ENCODE measurements at regions of chr20 and their contacts with region 1.

Region 1: DNA sequence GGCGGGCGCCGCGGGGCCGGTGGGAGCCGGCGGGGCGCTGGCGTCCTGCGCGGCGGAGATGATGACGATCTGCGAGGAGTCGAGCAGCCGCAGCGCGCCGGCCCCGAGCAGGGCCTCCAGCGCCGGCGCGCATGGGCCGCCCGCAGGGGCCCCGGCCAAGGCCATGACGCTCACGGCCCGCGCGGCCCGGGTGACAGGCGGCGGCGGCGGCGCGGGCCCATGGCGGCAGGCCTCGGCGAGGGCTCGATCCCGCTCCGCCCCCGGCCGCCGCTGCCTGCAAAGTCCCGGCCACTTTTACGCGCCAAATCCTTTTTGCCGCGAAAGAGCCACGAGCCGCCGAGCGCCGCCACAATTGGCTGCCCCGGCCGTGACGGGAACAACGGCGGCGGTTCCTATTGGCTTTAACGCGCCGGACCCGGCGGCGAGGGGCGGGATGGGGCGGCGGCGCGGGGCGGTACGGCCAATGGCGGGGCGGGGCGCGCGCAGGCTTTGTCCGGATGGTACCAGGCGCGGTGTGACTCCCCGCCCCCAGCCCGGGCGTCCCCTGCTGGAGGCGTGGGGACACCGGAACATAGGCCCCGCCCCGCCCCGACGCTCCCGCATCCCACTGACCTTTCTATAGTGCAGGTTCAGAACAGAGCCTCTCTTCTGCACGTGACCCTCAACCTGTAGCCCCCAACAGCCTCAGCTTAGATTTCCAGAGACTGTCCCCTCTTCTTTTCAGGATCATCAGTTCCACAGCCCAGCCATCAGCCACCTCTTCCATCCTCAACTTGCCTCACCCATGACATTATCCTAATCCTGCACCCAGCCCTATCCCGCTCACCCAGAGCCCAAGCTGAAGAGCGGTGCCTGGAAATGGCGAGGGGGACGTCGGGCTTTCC is at the start of gene E2F1:
- DNase-seq: peak; percentile 97
- H3K4me3 Mint-ChIP-seq: peak within 1 kb of the TSS; percentile 92
- H3K27ac Mint-ChIP-seq: peak within 1 kb of the TSS; percentile 89
- H3K4me1 Mint-ChIP-seq: peaks cover 71% of the 10 kb centered on the region
- H3K27me3 Mint-ChIP-seq: no peaks in the 10 kb centered on the region
- total RNA-seq, gene E2F1: 77.5 and 80.6 TPM in 2 replicates

Region 2: DNA sequence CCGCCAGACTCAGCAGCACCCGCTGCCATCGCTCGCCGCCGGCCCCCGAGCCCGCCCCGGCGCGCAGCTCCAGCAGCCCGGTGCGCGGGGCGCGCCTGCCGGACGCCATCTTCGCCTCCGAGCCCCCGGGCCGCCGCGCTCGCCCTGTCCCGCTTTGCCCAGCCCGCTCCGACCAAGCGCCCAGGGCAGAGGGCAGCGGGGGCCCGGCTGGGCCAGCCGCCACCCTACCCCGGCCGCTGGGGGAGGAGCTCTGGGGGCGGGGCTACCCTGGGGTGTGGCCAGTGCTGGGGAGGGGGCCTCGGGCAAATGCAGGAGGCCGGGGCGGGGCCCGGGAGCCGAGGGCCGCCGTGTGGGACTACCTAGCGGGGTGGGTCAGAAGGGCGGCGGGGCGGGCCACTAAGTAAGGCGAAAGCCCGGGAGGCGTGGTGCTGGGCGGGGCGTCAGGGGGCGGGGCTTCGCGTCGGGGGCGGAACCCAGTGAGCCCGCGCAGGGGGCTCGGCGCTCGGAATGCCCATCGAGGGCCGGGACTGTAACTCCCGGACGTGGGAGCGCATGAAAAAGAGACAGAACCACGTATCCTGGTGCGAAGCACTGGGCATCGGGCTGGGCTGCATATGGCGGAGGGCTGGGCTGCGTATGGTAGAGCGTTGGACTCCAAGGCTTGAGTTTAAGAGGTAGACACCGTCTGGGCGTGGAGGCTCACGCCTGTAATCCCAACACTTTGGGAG is 242.7 kb before region 1 on chr20 and contains the start of gene SNTA1:
- intact Hi-C with region 1: loop called (anchors 1 kb)
- DNase-seq: peak; percentile 82
- H3K4me3 Mint-ChIP-seq: peak within 1 kb of the TSS; percentile 88
- H3K27ac Mint-ChIP-seq: peak within 1 kb of the TSS; percentile 76
- H3K4me1 Mint-ChIP-seq: peaks cover 10% of the 10 kb centered on the region
- H3K27me3 Mint-ChIP-seq: peaks cover 11% of the 10 kb centered on the region
- total RNA-seq, gene SNTA1: 0.76 and 0.91 TPM in 2 replicates

Region 3: GRCh38 chr20:33653218-33653899 is 33.0 kb before region 1 on chr20:
- intact Hi-C with region 1: no loop called
- DNase-seq: no peak
- H3K4me3 Mint-ChIP-seq: no peak overlapping the region
- H3K27ac Mint-ChIP-seq: no peak overlapping the region
- H3K4me1 Mint-ChIP-seq: peaks cover 15% of the 10 kb centered on the region
- H3K27me3 Mint-ChIP-seq: no peaks in the 10 kb centered on the region

Region 4: GRCh38 chr20:33674295-33675135 is 11.8 kb before region 1 on chr20 and contains the start of gene NECAB3:
- intact Hi-C with region 1: loop called (anchors 1 kb)
- DNase-seq: peak; percentile 73
- H3K4me3 Mint-ChIP-seq: peak within 1 kb of the TSS; percentile 91
- H3K27ac Mint-ChIP-seq: peak within 1 kb of the TSS; percentile 87
- H3K4me1 Mint-ChIP-seq: peaks cover 54% of the 10 kb centered on the region
- H3K27me3 Mint-ChIP-seq: no peaks in the 10 kb centered on the region
- total RNA-seq, gene NECAB3: 30.7 and 31.2 TPM in 2 replicates

Region 5: DNA sequence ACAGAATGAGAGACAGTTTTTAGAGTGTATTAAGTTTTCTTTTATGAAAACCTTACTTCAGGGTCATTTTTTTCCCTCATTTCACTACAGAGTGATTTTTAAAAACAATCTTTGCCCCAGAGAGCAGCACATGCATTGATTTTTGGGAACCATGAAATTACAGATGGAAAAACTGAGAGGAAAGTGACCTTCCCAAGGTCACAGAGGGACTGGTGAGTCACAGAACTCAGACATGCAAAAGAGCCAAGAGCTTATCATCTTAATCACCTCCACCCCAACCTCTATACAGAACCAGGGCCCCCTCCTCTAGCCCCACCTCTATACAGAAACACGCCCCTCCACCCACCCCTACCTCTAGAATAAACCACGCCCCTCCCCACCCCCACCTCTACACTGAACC is 23.1 kb after region 1 on chr20:
- intact Hi-C with region 1: loop called (anchors 1 kb)
- DNase-seq: no peak
- H3K4me3 Mint-ChIP-seq: no peak overlapping the region
- H3K27ac Mint-ChIP-seq: peak overlapping the region; percentile 84
- H3K4me1 Mint-ChIP-seq: peaks cover 28% of the 10 kb centered on the region
- H3K27me3 Mint-ChIP-seq: no peaks in the 10 kb centered on the region

Region 6: GRCh38 chr20:33719989-33720709 is 33.8 kb after region 1 on chr20 and contains the start of gene PXMP4:
- intact Hi-C with region 1: loop called (anchors 1 kb)
- DNase-seq: peak; percentile 88
- H3K4me3 Mint-ChIP-seq: peak within 1 kb of the TSS; percentile 85
- H3K27ac Mint-ChIP-seq: peak within 1 kb of the TSS; percentile 93
- H3K4me1 Mint-ChIP-seq: peaks cover 30% of the 10 kb centered on the region
- H3K27me3 Mint-ChIP-seq: no peaks in the 10 kb centered on the region
- total RNA-seq, gene PXMP4: 7.3 and 7.9 TPM in 2 replicates

Region 7: GRCh38 chr20:34111702-34112599 is 425.6 kb after region 1 on chr20 and contains the start of gene EIF2S2:
- intact Hi-C with region 1: loop called (anchors 1 kb)
- DNase-seq: peak; percentile 96
- H3K4me3 Mint-ChIP-seq: peak within 1 kb of the TSS; percentile 88
- H3K27ac Mint-ChIP-seq: peak within 1 kb of the TSS; percentile 98
- H3K4me1 Mint-ChIP-seq: peaks cover 46% of the 10 kb centered on the region
- H3K27me3 Mint-ChIP-seq: peaks cover 1% of the 10 kb centered on the region
- total RNA-seq, gene EIF2S2: 99.8 and 105 TPM in 2 replicates